Heart left ventricle (tissue), 16 donors: ENCODE measurements at regions of chr7 and their contacts with region 1.

Region 1: GRCh38 chr7:119694506-119694905 is 578.5 kb upstream of the KCND2 start:
- DNase-seq: no peak
- ATAC-seq: no peak
- H3K4me3 ChIP-seq: no peak overlapping the region
- H3K27ac ChIP-seq: no peak overlapping the region
- H3K4me1 ChIP-seq: no peaks in the 10 kb centered on the region
- H3K27me3 ChIP-seq: no peaks in the 10 kb centered on the region
- CTCF ChIP-seq: no peak
- POLR2A ChIP-seq: no peak

Region 2: GRCh38 chr7:119756687-119757086 is 62.2 kb after region 1 on chr7:
- intact Hi-C with region 1: loop called in 1 of 10 experiments (anchors 10 kb)
- DNase-seq: no peak
- ATAC-seq: no peak
- H3K4me3 ChIP-seq: no peak overlapping the region
- H3K27ac ChIP-seq: no peak overlapping the region
- H3K4me1 ChIP-seq: no peaks in the 10 kb centered on the region
- H3K27me3 ChIP-seq: no peaks in the 10 kb centered on the region
- CTCF ChIP-seq: no peak
- POLR2A ChIP-seq: no peak